BJ (cell line): ENCODE measurements at regions of chr20 and their contacts with region 1.

Region 1: GRCh38 chr20:1503564-1504227 is 12.5 kb upstream of the SIRPB2 start:
- DNase-seq: peak; percentile 63
- H3K4me3 ChIP-seq: no peak overlapping the region
- H3K27me3 ChIP-seq: peaks cover 14% of the 10 kb centered on the region
- CTCF ChIP-seq: peak; percentile 100

Region 2: GRCh38 chr20:1281279-1282057 is 222.2 kb before region 1 on chr20:
- CTCF ChIA-PET with region 1: no interaction called
- POLR2A ChIA-PET with region 1: no interaction called
- DNase-seq: no peak
- H3K4me3 ChIP-seq: no peak overlapping the region
- H3K27me3 ChIP-seq: no peaks in the 10 kb centered on the region; the same call in 1 of the 2 replicates
- CTCF ChIP-seq: no peak

Region 3: DNA sequence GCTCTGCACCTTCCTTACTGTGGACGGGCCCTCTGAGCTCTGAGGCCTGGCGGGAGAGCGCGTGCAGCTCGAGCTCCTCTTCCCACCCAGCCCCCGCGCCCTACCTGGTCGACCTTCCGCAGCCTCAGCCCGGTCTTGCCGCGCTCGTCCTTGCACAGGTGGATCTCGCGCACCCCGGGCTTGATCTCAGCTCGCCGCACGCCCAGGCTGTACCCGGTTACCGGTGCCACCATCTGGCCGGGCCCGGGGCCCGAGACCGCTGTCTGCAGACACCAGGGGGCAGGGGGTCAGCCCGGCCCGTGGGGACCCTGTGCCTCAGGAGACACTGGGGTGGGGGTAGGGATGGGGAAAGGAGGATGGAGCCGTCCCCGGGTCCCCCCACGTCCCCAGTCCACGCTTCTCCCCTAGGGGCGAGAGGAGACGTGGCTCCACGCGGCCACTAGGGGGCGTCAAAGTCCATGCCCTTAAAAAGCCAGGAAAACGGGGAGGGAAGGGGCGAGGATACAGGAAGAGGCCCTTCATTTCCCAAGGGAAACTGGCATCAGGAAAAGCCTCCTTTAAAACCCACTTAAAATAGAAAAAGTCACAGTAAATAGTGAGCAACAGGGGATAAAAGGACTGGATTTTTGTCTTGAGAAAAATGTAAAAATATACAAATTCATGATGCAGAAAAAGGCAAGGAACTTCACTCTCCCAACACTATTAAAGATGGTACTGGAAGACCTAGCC is 190.3 kb before region 1 on chr20:
- CTCF ChIA-PET with region 1: interaction called, 10 read pairs
- POLR2A ChIA-PET with region 1: no interaction called
- DNase-seq: no peak
- H3K4me3 ChIP-seq: peak overlapping the region; percentile 21
- H3K27me3 ChIP-seq: no peaks in the 10 kb centered on the region
- CTCF ChIP-seq: peak; percentile 97

Region 4: DNA sequence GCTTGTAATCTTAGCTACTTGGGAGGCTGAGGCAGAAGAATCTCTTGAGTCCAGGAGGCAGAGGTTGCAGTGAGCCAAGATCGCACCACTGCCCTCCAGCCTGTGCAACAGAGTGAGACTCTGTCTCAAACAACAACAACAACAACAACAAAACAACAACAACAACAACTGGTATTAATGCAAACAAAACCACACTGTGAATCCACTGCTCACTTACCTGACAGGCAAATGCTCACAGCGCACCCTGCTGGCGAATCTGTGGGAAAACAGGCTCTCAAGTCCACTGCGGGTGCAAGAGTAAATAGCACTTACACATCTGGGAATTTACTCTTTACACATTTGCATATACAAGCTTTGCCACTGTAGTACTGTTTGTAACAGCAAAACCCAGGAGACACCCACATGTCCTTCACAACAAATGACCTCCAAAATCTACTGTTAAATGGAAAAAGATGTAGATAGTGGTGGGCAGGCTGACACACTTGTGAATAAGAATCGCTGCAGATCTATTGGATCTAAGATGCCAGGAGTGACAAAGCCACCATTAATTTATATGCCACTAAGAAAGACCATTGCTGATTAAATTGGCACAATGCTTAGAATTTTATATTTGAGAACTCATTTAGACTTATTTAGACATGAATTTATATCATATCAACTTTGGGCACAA is 66.3 kb before region 1 on chr20:
- CTCF ChIA-PET with region 1: interaction called, 13 read pairs
- POLR2A ChIA-PET with region 1: no interaction called
- DNase-seq: no peak
- H3K4me3 ChIP-seq: no peak overlapping the region
- H3K27me3 ChIP-seq: no peaks in the 10 kb centered on the region
- CTCF ChIP-seq: peak; percentile 84

Region 5: DNA sequence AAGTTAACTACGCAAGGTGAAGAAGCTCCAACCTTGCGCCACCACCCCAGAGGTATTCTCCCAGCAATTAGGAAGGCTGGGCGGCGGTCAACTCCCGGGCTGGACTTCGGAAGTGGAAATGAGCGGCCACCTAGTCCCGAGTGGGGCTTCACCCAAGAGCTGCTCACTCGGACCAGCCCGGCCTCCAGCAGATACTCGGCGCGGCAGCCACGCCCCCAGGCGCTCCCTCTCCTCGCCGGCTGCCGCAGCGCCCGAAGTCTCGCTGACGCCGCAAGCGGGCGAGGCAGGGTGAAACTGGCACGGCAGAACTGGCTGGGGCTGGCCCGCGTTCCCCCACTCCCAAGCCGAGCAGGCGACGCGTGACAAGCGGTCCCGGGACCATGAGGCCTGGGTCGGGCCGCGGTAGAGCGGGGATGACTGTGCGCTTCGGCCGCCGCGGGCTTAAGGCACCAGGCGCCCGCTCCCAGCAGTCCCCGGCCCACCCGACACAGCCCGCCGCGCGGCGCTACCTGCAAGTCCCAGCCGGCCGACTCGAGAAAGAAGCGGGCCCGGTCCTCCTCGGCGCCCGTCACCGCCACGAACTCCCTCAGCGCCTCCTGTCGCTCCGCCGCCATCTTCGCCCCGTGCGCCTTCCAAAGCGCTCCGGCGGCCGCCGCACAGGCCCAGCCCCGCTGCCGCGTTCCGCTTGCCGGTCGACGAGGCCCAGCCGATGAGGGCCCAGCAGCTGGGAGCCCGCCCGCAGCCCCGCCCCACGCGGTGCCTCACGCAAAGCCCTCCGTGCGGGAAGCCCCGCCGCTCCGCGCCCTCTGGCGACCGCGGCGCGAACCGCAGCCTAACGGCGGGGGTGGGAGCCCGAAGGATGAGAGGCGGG is 37.2 kb before region 1 on chr20 and contains the start of gene NSFL1C:
- CTCF ChIA-PET with region 1: interaction called, 71 read pairs
- POLR2A ChIA-PET with region 1: no interaction called
- DNase-seq: peak; percentile 37
- H3K4me3 ChIP-seq: peak within 1 kb of the TSS; percentile 96
- H3K27me3 ChIP-seq: no peaks in the 10 kb centered on the region
- CTCF ChIP-seq: peak; percentile 85
- polyA plus RNA-seq, gene NSFL1C: 27.7 and 32.4 TPM in 2 replicates

Region 6: GRCh38 chr20:1474825-1475603 is 28.7 kb before region 1 on chr20:
- CTCF ChIA-PET with region 1: interaction called, 71 read pairs
- POLR2A ChIA-PET with region 1: no interaction called
- DNase-seq: no peak
- H3K4me3 ChIP-seq: no peak overlapping the region
- H3K27me3 ChIP-seq: no peaks in the 10 kb centered on the region
- CTCF ChIP-seq: no peak

Region 7: GRCh38 chr20:1480236-1480635 is 23.5 kb before region 1 on chr20:
- CTCF ChIA-PET with region 1: interaction called, 14 read pairs
- POLR2A ChIA-PET with region 1: interaction called, 10 read pairs
- DNase-seq: no peak
- H3K4me3 ChIP-seq: no peak overlapping the region
- H3K27me3 ChIP-seq: no peaks in the 10 kb centered on the region
- CTCF ChIP-seq: no peak

Region 8: GRCh38 chr20:1491860-1492642 is 11.6 kb before region 1 on chr20:
- CTCF ChIA-PET with region 1: interaction called, 19 read pairs
- POLR2A ChIA-PET with region 1: no interaction called
- DNase-seq: no peak
- H3K4me3 ChIP-seq: no peak overlapping the region
- H3K27me3 ChIP-seq: peaks cover 14% of the 10 kb centered on the region
- CTCF ChIP-seq: no peak

Region 9: GRCh38 chr20:1900321-1900801 is 396.7 kb after region 1 on chr20:
- CTCF ChIA-PET with region 1: no interaction called
- POLR2A ChIA-PET with region 1: no interaction called
- DNase-seq: peak; percentile 31
- H3K4me3 ChIP-seq: no peak overlapping the region
- H3K27me3 ChIP-seq: no peaks in the 10 kb centered on the region
- CTCF ChIP-seq: peak; percentile 80